ENCODE measurements at regions of chr1 and their contacts with region 1.

Region 1: DNA sequence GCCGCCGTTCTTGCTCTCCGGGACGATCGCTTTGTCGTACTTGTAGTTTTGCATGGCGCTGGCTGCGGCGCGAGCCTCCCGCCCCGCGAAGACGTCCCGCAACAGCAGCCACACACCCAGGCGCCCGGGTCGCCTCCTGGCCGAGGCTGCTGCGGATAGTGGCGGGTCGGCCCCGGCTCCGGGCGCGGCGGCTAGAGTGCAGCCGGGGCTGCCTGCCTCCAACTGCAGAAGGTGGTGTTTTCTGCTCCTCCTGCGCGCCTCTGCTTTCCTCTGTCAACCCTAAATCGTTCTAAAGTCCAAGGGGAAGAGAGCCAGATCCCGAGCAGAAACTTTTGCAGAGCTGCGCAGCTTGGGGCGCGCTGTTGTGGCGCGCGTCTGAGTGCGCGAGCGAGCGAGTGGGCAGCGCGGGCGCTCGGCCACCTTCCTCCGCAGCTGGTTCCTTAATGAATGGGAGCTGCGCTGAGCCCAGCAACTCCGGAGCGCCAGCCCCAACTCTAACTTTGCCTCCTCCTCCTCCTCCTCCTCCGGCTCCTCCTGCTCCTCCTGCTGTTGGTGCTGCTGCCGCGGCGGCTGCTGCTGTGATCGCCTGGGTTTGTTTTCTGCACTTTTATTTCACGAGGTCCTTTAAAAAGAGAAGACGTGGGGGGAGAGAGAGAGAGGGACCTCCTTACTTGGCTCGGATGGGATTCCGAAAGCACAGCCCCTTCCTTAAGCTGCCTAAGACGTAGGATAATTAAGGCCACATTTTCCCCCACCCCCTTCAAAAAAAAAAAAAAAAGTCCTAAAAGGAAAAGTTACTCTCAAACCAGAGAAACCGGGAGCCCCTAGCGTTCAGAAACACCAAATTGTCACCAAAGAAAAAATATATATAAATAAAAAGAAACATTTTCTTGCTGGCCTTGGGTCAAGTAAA is at the start of gene PLPP3:
- DNase-seq: peak; percentile 90
- ATAC-seq: peak; percentile 93
- H3K4me3 ChIP-seq: peak within 1 kb of the TSS; percentile 89
- H3K27ac ChIP-seq: peak within 1 kb of the TSS; percentile 93
- H3K4me1 ChIP-seq: peaks cover 33% of the 10 kb centered on the region
- H3K27me3 ChIP-seq: no peaks in the 10 kb centered on the region
- CTCF ChIP-seq: peak; percentile 46
- total RNA-seq, gene PLPP3: 106 TPM

Region 2: DNA sequence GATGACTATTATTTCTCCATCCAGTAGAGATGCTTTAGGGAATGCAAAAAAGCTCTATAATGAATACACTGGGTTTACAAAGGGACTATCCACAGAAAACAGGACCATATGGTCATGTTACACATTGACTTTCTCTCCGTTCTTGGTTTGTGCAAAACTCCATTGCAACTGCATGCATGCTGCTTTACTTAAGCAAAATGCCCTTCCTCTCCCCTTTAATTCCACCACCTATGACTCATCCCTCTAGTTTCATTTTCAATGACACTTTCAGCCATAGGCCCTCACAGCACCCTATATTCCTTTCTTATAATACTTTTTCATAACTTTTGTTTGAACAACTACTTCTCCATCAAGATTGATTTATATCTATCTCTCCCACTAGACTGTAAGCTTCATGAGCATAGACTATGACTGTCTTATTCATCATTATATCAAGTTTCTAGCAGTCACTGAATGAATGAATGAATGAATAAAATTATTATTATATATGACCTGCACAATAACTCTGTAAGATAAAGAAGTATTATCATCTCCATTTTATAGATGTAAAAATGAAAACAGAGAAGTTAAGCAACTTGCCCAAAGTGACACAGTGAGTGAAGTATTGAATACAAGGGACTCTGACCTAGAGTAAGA is 248.7 kb before region 1 on chr1:
- intact Hi-C with region 1: no loop called
- DNase-seq: no peak
- ATAC-seq: peak in 1 of 2 donors; percentile 49
- H3K4me3 ChIP-seq: no peak overlapping the region
- H3K27ac ChIP-seq: no peak overlapping the region
- H3K4me1 ChIP-seq: no peaks in the 10 kb centered on the region
- H3K27me3 ChIP-seq: no peaks in the 10 kb centered on the region
- CTCF ChIP-seq: no peak

Region 3: GRCh38 chr1:56416471-56416882 is 162.7 kb before region 1 on chr1:
- intact Hi-C with region 1: loop called (anchors 5 kb)
- DNase-seq: no peak
- ATAC-seq: peak in 1 of 2 donors; percentile 43
- H3K4me3 ChIP-seq: no peak overlapping the region
- H3K27ac ChIP-seq: no peak overlapping the region
- H3K4me1 ChIP-seq: peaks cover 16% of the 10 kb centered on the region
- H3K27me3 ChIP-seq: no peaks in the 10 kb centered on the region
- CTCF ChIP-seq: peak; percentile 28

Region 4: DNA sequence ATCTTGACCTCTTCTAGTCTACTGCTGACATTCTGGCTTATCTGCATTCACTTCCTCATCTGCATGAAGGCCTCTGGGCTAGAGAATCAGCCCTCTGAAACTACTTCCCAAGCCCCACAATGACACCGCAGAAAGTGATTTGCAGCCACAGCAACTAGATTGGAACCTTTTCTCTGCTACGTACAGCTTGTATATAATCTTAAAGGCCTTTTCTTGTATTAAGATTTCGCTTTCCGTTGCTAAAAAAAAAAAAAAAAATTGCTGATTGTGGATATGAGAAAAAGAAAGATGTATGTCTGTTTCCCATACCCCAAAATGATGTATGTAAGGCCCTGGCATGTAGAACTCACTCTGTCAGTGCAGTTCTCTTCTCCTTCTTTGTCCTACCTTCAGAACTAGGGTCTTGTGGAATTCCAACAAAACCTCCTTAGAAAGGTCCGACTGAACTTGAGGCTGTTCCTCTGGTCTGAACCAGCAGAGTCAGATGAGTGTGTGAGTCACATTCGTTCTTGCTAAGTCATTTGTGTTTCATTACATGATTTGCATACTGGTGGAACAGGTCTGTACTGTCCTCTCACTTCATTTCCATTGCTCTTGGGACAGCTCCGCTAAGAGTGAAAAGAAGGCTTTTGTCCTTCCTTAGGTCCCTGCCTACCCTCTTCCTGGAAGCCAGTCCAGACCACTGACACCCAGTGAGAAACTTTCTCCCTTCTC is 62.5 kb before region 1 on chr1:
- intact Hi-C with region 1: loop called (anchors 10 kb)
- DNase-seq: no peak
- ATAC-seq: peak; percentile 92 to 95
- H3K4me3 ChIP-seq: no peak overlapping the region
- H3K27ac ChIP-seq: peak overlapping the region; percentile 61
- H3K4me1 ChIP-seq: peaks cover 36% of the 10 kb centered on the region
- H3K27me3 ChIP-seq: no peaks in the 10 kb centered on the region
- CTCF ChIP-seq: no peak